Right cardiac atrium (tissue), 5 donors: ENCODE measurements at regions of chr7 and their contacts with region 1.

Region 1: DNA sequence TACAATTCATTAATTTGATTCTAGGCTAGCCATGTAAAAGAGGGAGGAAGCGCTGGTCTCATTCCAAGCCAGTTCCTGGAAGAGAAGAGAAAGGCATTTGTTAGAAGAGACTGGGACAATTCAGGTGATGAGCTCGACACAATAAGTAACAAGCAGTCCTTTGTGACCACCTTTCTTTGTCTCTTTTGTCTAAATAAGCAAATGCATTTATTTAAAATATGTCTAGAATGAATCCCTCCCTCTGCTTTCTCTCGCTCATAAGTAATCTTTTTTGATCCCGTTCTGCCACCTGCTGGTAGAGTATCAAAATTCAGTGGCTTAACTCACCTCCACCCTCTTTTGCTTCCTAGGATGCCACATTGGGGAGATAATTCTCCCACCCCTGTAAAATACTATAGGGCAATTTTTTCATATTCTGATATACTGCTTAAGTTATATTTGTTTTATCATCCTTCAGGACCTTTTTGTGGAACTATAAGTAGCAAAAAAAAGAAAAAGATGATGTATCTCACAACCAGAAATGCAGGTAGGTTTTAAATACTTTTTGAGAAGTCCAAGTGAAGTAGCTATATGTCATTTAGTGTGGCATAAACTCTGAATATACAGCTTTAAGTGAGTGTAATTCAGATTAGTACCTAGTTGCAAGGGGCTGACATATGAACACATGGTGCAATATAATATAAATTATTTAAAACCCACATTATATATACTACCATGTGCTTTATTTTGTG is 91.5 kb downstream of the GSDME start:
- DNase-seq: no peak
- ATAC-seq: no peak
- H3K4me3 ChIP-seq: no peak overlapping the region
- H3K27ac ChIP-seq: no peak overlapping the region
- H3K4me1 ChIP-seq: no peaks in the 10 kb centered on the region
- H3K27me3 ChIP-seq: no peaks in the 10 kb centered on the region

Region 2: GRCh38 chr7:24038993-24039392 is 626.7 kb before region 1 on chr7:
- intact Hi-C with region 1: no loop called
- DNase-seq: no peak
- ATAC-seq: no peak
- H3K4me3 ChIP-seq: no peak overlapping the region
- H3K27ac ChIP-seq: no peak overlapping the region
- H3K4me1 ChIP-seq: no peaks in the 10 kb centered on the region
- H3K27me3 ChIP-seq: no peaks in the 10 kb centered on the region

Region 3: GRCh38 chr7:24290004-24290641 is 375.6 kb before region 1 on chr7:
- intact Hi-C with region 1: loop called in 1 of 4 experiments (anchors 10 kb)
- DNase-seq: peak in 1 of 3 donors; percentile 35
- ATAC-seq: peak; percentile 62 to 64
- H3K4me3 ChIP-seq: no peak overlapping the region
- H3K27ac ChIP-seq: no peak overlapping the region
- H3K4me1 ChIP-seq: no peaks in the 10 kb centered on the region
- H3K27me3 ChIP-seq: no peaks in the 10 kb centered on the region

Region 4: DNA sequence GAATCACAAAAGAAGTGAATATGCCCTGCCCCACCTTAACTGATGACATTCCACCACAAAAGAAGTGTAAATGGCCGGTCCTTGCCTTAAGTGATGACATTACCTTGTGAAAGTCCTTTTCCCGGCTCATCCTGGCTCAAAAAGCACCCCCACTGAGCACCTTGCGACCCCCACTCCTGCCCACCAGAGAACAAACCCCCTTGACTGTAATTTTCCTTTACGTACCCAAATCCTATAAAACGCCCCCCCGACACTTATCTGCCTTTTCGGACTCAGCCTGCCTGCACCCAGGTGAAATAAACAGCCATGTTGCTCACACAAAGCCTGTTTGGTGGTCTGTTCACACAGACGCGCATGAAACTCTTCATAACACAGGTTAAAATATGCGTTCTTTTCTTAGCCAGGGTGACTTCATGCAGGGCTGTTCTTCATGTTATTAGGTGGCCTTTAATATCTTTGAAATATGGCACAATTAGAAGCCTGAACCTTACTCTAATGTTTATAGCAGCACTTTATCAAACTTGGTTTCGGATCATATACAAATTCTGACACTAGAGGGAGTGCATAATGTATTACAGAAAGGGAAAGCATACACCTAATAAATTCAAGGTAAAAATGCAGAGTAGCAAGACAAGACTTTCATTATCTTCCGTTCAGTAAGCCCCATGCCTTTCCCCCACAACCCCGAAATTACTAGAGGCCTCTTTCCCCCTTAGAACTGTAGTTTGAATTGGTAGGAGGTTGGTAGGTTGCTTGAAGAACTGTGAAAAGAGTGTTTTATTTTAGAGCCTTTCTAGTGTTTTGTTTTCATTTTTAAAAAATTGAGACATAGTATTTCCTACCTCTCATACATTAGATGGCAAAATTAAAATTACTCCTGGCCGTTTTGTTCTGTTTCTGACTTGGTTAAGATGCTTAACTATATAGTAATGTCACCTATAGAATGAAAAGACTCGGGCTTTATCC is 263.8 kb before region 1 on chr7:
- intact Hi-C with region 1: loop called in 1 of 4 experiments (anchors 10 kb)
- DNase-seq: no peak
- ATAC-seq: no peak
- H3K4me3 ChIP-seq: no peak overlapping the region
- H3K27ac ChIP-seq: no peak overlapping the region
- H3K4me1 ChIP-seq: no peaks in the 10 kb centered on the region
- H3K27me3 ChIP-seq: no peaks in the 10 kb centered on the region